A549 (cell line): ENCODE measurements at regions of chr16 and their contacts with region 1.

Region 1: DNA sequence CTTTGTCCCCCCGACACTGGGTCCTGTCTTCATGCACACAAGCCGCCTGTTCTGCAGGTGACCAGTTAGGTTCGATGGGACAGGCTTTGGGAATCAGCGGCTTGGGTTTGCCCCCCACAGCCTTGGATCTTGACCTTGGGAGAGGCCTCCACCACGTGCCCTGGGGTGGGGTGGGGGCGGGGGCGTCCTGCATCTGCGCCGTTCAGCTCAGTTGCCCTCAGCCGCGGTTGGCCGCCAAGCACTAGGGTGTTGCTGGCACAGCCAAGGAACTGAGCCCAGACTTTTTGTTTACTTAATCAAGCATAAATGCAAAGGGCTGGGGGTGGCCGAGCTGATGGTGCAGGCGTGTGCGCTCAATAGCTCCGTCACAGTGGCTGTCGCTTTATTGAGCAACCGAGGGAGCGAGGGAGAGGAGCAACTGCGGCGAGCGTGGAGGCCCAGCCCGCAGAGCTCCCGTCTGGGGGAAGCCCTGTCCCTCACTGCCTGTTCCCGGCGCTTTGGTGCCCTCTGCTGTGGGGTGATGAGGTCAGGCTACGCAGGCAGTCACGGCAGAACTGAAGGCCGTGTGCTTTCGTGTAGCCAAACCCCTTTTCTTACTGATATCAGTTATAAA is 33.9 kb downstream of the JPH3 start:
- DNase-seq: peak; percentile 87 to 98
- ATAC-seq: peak; percentile 90 to 95
- H3K4me3 ChIP-seq: peak overlapping the region; percentile 53
- H3K27ac ChIP-seq: peak overlapping the region; percentile 75 to 85
- H3K4me1 ChIP-seq: 0 out of 3 replicates have a peak, but pooled peaks cover 7% of the 10 kb centered on the region
- CTCF ChIP-seq: peak; percentile 84
- EP300 ChIP-seq: no peak
- POLR2A ChIP-seq: peak; percentile 32
- RAD21 ChIP-seq: peak; percentile 91 to 95

Region 2: DNA sequence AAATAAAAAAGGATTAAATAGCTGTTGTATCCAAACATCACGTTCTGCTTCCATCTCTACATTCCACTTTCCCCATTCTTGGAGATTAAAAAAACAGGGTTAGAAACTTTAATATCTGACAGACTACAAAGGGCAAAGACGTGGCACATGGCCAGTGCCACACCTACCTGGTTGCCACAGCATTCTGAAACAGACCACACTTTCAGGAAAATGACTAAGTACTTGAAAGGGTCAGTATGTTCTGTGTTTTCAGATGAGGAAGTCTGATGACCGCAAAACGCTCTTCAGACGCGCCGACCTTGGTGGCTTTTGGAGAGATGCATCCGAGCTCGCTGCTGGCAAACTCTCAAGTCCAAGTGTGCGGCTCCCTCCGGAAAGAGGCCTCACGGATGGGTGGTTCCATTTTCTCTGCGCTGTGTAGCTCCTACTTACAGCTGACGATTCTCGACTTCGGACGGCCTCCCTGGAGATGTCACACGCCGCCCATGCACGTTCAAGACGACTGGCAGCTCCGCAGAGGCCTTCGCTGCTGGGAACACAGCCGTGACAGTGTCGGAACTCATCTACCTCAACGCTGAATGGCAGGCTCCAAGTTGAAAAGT is 228.6 kb before region 1 on chr16:
- CTCF ChIA-PET with region 1: interaction called, 23 read pairs
- POLR2A ChIA-PET with region 1: no interaction called
- DNase-seq: no peak
- ATAC-seq: no peak
- H3K4me3 ChIP-seq: no peak overlapping the region
- H3K27ac ChIP-seq: no peak overlapping the region
- H3K4me1 ChIP-seq: no peaks in the 10 kb centered on the region
- CTCF ChIP-seq: no peak
- EP300 ChIP-seq: no peak
- POLR2A ChIP-seq: no peak
- RAD21 ChIP-seq: no peak

Region 3: DNA sequence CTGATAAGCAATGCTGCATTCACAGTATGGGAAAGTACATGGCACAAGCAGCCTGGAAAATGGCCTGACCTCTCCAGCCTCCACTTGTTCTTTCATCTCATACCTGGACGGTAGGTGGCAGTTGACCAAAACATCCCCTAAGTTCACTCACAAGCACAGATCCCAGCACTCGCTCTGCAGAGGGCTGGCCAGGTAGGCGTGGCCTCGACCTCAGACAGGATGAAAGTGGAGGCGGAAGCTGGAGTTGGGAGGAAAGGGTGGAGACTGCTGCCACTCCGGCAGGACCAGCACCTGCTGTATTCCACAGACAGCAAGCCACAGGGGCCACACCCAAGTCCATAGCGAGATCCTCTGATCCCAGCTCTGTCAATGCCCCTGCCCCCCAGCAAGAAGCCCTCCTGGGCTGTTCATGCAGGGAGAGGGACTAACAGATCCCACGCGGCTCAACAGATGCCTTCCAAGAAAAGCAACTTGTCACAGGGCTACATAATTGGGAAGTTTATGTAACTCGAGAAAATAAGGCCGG is 174.6 kb before region 1 on chr16:
- CTCF ChIA-PET with region 1: interaction called, 85 read pairs
- POLR2A ChIA-PET with region 1: no interaction called
- DNase-seq: peak; percentile 94
- ATAC-seq: peak; percentile 98 to 99
- H3K4me3 ChIP-seq: peak overlapping the region; percentile 40
- H3K27ac ChIP-seq: peak overlapping the region; percentile 72 to 86
- H3K4me1 ChIP-seq: peaks cover 40% of the 10 kb centered on the region
- CTCF ChIP-seq: peak; percentile 67
- EP300 ChIP-seq: no peak
- POLR2A ChIP-seq: 0 out of 2 replicates have a peak, but pooled peaks have one; percentile 11
- RAD21 ChIP-seq: peak; percentile 39 to 42; a peak in 3 of 5 replicates

Region 4: DNA sequence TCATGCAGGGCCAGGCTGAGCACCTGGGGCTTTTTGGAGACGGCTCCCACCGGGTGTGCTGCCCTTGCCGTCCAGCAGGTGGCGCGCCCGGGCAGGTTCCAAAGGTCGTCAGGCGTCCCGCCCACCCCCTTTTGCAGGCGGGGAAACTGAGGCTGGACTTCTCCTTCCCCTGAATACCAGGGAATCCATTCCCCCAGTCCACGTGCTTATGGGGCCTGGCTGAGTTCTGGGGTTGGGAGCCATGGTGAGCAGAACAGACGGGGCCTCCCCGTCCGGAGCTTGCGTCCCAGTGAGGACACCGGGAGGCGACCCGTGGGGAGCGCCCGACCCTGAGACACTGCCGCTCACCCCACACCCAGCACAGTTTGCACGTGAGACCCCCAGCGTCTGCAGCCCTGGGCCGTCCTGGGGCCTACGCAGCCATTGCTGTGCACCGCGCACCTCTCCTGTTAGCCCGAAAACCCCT is 85.6 kb before region 1 on chr16:
- CTCF ChIA-PET with region 1: interaction called, 49 read pairs
- POLR2A ChIA-PET with region 1: no interaction called
- DNase-seq: peak; percentile 25 to 36
- ATAC-seq: peak; percentile 54 to 70; a peak in 4 of 6 replicates
- H3K4me3 ChIP-seq: no peak overlapping the region
- H3K27ac ChIP-seq: no peak overlapping the region
- H3K4me1 ChIP-seq: no peaks in the 10 kb centered on the region
- CTCF ChIP-seq: peak; percentile 84
- EP300 ChIP-seq: no peak
- POLR2A ChIP-seq: no peak
- RAD21 ChIP-seq: peak; percentile 65 to 73

Region 5: DNA sequence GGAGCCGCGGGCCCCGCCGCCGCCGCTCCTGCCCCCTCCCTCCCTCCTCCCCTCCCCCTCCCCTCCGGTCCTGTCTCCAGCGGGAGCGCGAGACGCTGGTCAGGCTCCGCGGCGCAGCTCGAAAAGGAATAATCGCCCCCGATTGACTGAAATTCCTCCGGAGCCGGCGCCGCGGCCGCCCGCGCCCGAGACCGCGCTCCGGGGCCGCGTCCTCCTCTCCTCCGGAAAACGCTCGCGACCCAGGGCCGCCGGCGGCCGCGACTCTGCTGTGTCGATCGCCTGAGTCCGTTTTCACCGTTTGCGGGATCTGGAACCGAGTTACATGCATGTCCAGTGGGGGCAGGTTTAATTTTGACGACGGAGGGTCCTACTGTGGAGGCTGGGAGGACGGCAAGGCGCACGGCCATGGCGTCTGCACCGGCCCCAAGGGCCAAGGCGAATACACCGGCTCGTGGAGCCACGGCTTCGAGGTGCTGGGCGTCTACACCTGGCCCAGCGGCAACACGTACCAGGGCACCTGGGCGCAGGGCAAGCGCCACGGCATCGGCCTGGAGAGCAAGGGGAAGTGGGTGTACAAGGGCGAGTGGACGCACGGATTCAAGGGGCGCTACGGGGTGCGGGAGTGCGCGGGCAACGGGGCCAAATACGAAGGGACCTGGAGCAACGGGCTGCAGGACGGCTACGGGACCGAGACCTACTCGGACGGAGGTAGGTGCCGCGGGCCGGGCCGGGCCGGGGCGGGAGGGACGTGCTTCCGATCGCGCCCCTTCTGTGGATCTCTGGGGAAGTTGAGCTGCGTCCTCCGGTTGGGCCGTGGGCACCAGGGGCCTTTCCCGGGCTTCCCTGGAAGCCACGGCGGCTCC is 33.1 kb before region 1 on chr16:
- CTCF ChIA-PET with region 1: interaction called, 31 read pairs
- POLR2A ChIA-PET with region 1: no interaction called
- DNase-seq: peak in 1 of 2 experiments; percentile 23
- ATAC-seq: peak in 1 of 2 experiments; percentile 55; a peak in 3 of 6 replicates
- H3K4me3 ChIP-seq: peak overlapping the region; percentile 55
- H3K27ac ChIP-seq: peak overlapping the region in 1 of 2 experiments; percentile 53; a peak in 3 of 6 replicates
- H3K4me1 ChIP-seq: peaks cover 8% of the 10 kb centered on the region; the same call in 1 of the 3 replicates
- CTCF ChIP-seq: no peak
- EP300 ChIP-seq: no peak
- POLR2A ChIP-seq: no peak
- RAD21 ChIP-seq: no peak

Region 6: GRCh38 chr16:87765776-87766484 is 129.8 kb after region 1 on chr16 and contains the start of gene KLHDC4:
- CTCF ChIA-PET with region 1: interaction called, 11 read pairs
- POLR2A ChIA-PET with region 1: no interaction called
- DNase-seq: peak; percentile 90 to 91
- ATAC-seq: peak; percentile 92 to 95
- H3K4me3 ChIP-seq: peak within 1 kb of the TSS; percentile 92
- H3K27ac ChIP-seq: peak within 1 kb of the TSS; percentile 89 to 91
- H3K4me1 ChIP-seq: peaks cover 18% of the 10 kb centered on the region
- CTCF ChIP-seq: no peak
- EP300 ChIP-seq: no peak
- POLR2A ChIP-seq: peak; percentile 74
- RAD21 ChIP-seq: no peak
- polyA plus RNA-seq, gene KLHDC4: 22.6 and 25.9 TPM in 2 replicates